ENCODE measurements at regions of chr7 and their contacts with region 1.

Region 1: GRCh38 chr7:141551094-141551781 is at the start of gene AGK:
- DNase-seq: peak; percentile 75
- H3K4me3 Mint-ChIP-seq: peak within 1 kb of the TSS; percentile 92
- H3K27ac Mint-ChIP-seq: peak within 1 kb of the TSS; percentile 97
- H3K4me1 Mint-ChIP-seq: peaks cover 41% of the 10 kb centered on the region
- H3K27me3 Mint-ChIP-seq: no peaks in the 10 kb centered on the region
- total RNA-seq, gene AGK: 144 and 147 TPM in 2 replicates

Region 2: DNA sequence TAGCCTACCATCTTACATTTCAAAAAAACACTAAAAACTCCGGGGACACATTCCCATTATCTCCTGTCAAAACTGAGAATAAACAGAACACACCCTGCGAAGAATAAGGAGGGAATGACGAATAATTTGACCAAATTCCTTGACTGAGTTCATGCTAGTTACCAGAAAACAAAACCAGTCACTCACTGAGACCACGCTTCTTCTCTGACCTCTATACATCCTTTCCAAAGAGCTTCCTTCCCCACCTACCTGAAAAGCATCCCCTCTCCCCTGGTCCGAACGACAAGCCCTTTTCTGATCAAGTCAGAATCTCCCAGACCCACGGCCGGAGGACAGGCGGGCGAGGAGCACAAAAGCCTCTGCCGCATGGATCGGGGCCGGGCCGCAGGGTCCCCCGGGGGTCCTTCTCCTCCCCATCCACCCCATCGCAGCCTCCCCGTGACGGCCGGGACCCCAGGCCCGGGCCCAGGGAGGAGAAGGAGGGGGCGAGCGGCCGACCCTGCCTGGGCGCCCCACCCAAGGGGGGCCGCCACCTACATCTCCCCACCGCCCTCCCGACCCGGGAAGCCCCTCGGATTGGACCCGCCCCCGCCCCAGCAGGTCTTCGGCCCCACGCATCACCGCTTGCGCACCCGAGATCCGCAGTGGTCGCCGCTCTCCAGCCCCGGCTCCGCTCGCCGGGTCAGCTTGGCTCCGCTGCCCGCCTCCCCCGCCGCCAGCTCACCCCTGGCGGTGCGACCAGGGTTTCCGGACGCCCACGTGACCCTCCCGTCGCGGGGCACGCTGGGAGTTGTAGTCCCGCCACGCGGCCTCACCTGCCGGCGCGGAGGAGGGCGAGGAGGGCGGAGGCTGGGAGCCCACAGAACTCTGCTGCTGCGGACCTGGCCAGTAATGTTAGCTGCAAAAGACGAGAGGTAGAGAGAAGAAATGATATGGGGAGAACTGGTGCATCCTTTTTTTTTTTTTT is 1153.2 kb before region 1 on chr7 and contains the start of gene SLC37A3:
- intact Hi-C with region 1: loop called (anchors 10 kb)
- DNase-seq: peak; percentile 80
- H3K4me3 Mint-ChIP-seq: peak within 1 kb of the TSS; percentile 86
- H3K27ac Mint-ChIP-seq: peak within 1 kb of the TSS; percentile 88
- H3K4me1 Mint-ChIP-seq: peaks cover 36% of the 10 kb centered on the region
- H3K27me3 Mint-ChIP-seq: no peaks in the 10 kb centered on the region
- total RNA-seq, gene SLC37A3: 98.3 and 105 TPM in 2 replicates

Region 3: DNA sequence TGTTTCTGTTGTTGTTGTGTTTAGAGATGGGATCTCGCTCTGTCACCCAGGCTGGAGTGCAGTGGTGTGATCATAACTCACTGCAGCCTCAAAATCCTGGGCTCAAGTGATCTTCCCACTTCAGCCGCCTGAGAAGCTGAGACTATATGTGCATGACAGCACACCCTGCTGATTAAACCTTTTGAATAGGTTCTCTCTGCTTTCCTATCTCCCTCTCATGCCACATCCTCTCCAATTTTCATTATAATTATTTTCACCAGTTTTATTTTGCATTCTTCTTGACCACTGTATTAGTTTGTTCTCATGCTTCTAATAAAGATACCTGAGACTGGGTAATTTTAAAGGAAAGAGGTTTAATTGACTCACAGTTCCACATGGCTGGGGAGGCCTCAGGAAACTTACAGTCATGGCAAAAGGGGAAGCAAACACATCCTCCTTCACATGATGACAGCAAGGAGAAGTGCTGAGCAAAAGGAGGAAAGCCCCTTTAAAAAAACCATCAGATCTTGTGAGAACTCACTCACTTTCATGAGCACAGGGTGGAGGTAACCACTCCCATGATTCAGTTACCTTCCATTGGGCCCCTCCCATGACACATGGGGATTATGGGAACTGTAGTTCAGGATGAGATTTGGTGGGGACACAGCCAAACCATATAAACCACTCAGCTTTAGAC is 12.9 kb after region 1 on chr7:
- intact Hi-C with region 1: no loop called
- DNase-seq: no peak
- H3K4me3 Mint-ChIP-seq: peak overlapping the region; percentile 9
- H3K27ac Mint-ChIP-seq: peak overlapping the region; percentile 91
- H3K4me1 Mint-ChIP-seq: peaks cover 59% of the 10 kb centered on the region
- H3K27me3 Mint-ChIP-seq: no peaks in the 10 kb centered on the region

Region 4: GRCh38 chr7:141674702-141675101 is 123.5 kb after region 1 on chr7:
- intact Hi-C with region 1: loop called (anchors 5 kb)
- DNase-seq: no peak
- H3K4me3 Mint-ChIP-seq: no peak overlapping the region
- H3K27ac Mint-ChIP-seq: peak overlapping the region; percentile 68
- H3K4me1 Mint-ChIP-seq: peaks cover 33% of the 10 kb centered on the region
- H3K27me3 Mint-ChIP-seq: no peaks in the 10 kb centered on the region

Region 5: GRCh38 chr7:141737834-141738591 is 186.8 kb after region 1 on chr7 and contains the start of gene SSBP1:
- intact Hi-C with region 1: loop called (anchors 1 kb)
- DNase-seq: peak; percentile 93
- H3K4me3 Mint-ChIP-seq: peak within 1 kb of the TSS; percentile 94
- H3K27ac Mint-ChIP-seq: peak within 1 kb of the TSS; percentile 93
- H3K4me1 Mint-ChIP-seq: peaks cover 23% of the 10 kb centered on the region
- H3K27me3 Mint-ChIP-seq: no peaks in the 10 kb centered on the region
- total RNA-seq, gene SSBP1: 244 and 245 TPM in 2 replicates